T-cell (primary cell): ENCODE measurements at regions of chr4 and their contacts with region 1.

Region 1: GRCh38 chr4:163554870-163555465 is 60.5 kb downstream of the TMA16 start:
- DNase-seq: peak in 1 of 35 experiments; percentile 53
- ATAC-seq: no peak
- H3K4me3 ChIP-seq: no peak overlapping the region
- H3K4me3 Mint-ChIP-seq: no peak overlapping the region
- H3K27ac ChIP-seq: no peak overlapping the region
- H3K27ac Mint-ChIP-seq: no peak overlapping the region
- H3K4me1 ChIP-seq: peaks cover 10 to 16% of the 10 kb centered on the region in 2 experiments
- H3K4me1 Mint-ChIP-seq: peaks cover 30 to 44% (median 35%) of the 10 kb centered on the region in 3 donors
- H3K27me3 ChIP-seq: no peaks in the 10 kb centered on the region
- H3K27me3 Mint-ChIP-seq: no peaks in the 10 kb centered on the region

Region 2: DNA sequence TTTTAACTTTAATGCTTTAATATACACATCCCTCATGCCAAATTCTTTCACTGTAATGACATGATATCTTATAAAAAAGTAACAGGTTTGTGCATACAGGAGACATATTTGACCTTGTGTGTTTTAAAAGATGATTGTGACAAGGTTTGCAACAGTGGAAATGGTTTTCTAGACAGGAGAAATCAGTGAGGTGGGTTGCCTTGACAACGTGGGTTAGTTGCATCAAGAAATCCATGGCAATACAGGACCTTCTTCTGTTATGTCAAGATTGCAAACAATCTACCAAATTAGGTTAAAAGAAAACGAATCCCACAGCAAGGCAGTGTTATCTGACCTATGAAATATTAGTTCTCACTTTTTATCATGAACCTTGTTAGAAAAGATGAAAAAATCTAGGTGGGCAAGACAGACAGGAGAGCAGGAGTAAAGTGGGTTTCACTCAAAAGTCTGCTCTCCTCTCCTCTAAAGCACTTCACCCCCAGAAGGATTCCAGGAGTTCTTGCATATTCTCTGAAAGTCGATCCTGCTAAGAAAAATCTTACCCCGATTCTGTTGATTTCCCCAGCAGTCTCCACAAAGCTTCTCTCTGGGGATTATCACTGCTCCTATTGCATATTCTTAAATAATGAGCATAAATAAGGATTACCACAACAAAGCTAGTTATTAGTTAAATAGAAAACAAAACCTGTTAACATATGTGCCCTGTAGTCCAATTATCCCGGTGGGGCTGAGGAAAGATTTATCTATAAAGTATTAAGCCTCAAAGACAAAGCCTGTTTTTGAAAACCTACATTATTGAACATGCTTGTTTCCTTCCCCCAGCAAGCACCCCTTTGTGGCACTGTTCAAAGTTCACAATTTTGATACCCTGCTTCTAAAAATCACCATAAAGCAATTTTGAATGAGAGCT is 10.5 kb after region 1 on chr4:
- CTCF ChIA-PET with region 1: interaction called, 4 to 11 read pairs
- POLR2A ChIA-PET with region 1: no interaction called
- DNase-seq: no peak
- ATAC-seq: no peak
- H3K4me3 ChIP-seq: no peak overlapping the region
- H3K4me3 Mint-ChIP-seq: no peak overlapping the region
- H3K27ac ChIP-seq: no peak overlapping the region
- H3K27ac Mint-ChIP-seq: peak overlapping the region in 1 of 2 donors; percentile 29
- H3K4me1 ChIP-seq: no peaks in the 10 kb centered on the region
- H3K4me1 Mint-ChIP-seq: peaks cover 0 to 5% (median 5%) of the 10 kb centered on the region in 3 donors
- H3K27me3 ChIP-seq: no peaks in the 10 kb centered on the region
- H3K27me3 Mint-ChIP-seq: no peaks in the 10 kb centered on the region

Region 3: DNA sequence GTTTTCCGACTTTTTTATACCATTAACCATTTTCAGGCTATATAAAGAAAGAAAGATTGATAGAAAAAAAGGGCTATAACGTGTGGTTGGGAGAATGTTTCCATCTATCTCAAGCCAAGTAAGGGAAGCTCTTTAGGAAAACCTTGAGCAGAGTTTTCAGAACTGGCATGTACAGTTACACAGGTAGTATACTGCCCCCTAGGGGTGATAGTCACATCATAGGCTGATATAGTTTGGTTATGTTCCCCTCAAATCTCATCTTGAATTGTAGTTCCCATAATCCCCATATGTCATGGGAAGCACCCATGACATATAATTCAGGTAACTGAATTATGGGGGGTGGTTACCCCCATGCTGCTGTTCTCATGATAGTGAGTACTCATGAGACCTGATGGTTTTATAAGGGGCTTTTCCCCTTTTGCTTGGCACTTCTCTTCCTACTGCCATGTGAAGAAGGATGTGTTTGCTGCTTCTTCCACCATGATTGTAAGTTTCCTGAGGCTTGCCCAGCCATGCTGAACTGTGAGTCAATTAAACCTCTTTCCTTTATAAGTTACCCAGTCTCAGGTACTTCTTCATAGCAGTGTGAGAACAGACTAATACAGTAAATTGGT is 126.3 kb after region 1 on chr4:
- CTCF ChIA-PET with region 1: interaction called, 20 to 78 read pairs
- POLR2A ChIA-PET with region 1: no interaction called
- DNase-seq: peak in 12 of 35 experiments; percentile 0 to 78 (median 26)
- ATAC-seq: peak in 3 of 4 experiments; percentile 40 to 77 (median 49)
- H3K4me3 ChIP-seq: no peak overlapping the region
- H3K4me3 Mint-ChIP-seq: no peak overlapping the region
- H3K27ac ChIP-seq: no peak overlapping the region
- H3K27ac Mint-ChIP-seq: no peak overlapping the region
- H3K4me1 ChIP-seq: no peaks in the 10 kb centered on the region
- H3K4me1 Mint-ChIP-seq: peaks cover 1 to 5% (median 5%) of the 10 kb centered on the region in 3 donors
- H3K27me3 ChIP-seq: no peaks in the 10 kb centered on the region
- H3K27me3 Mint-ChIP-seq: peaks cover 0 to 3% of the 10 kb centered on the region in 2 donors

Region 4: DNA sequence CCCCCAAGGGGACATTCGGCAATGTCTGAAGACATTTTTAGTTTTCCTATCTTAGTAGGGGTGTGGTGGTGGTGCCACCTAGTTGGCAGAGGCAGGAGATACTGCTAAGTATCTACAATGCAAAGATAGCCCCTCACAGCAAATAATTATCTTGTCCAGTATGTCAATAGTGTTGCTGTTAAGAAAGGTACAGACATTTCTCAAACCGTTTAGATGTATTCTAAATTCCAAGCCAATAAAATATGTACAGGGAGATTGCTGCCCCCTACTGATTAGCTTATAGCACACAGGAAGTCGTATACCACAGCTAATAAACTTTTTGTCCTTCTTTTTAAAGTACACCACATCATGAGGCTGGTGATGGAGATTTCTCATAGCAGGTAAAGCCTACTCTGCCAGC is 200.0 kb after region 1 on chr4:
- CTCF ChIA-PET with region 1: interaction called, 4 to 42 read pairs
- POLR2A ChIA-PET with region 1: interaction called, 3 read pairs
- DNase-seq: peak in 1 of 35 experiments; percentile 47
- ATAC-seq: peak in 3 of 4 experiments; percentile 46 to 53 (median 46)
- H3K4me3 ChIP-seq: no peak overlapping the region
- H3K4me3 Mint-ChIP-seq: no peak overlapping the region
- H3K27ac ChIP-seq: no peak overlapping the region
- H3K27ac Mint-ChIP-seq: no peak overlapping the region
- H3K4me1 ChIP-seq: no peaks in the 10 kb centered on the region
- H3K4me1 Mint-ChIP-seq: peaks cover 0 to 4% (median 2%) of the 10 kb centered on the region in 3 donors
- H3K27me3 ChIP-seq: no peaks in the 10 kb centered on the region
- H3K27me3 Mint-ChIP-seq: peaks cover 0 to 3% of the 10 kb centered on the region in 2 donors

Region 5: GRCh38 chr4:164731827-164732474 is 1177.0 kb after region 1 on chr4:
- CTCF ChIA-PET with region 1: interaction called, 64 to 99 read pairs
- POLR2A ChIA-PET with region 1: no interaction called
- DNase-seq: peak in 32 of 35 experiments; percentile 5 to 63 (median 28)
- ATAC-seq: peak in 1 of 4 experiments; percentile 42
- H3K4me3 ChIP-seq: no peak overlapping the region
- H3K4me3 Mint-ChIP-seq: no peak overlapping the region
- H3K27ac ChIP-seq: no peak overlapping the region
- H3K27ac Mint-ChIP-seq: no peak overlapping the region
- H3K4me1 ChIP-seq: no peaks in the 10 kb centered on the region
- H3K4me1 Mint-ChIP-seq: no peaks in the 10 kb centered on the region
- H3K27me3 ChIP-seq: peaks cover 0 to 2% of the 10 kb centered on the region in 2 experiments
- H3K27me3 Mint-ChIP-seq: peaks cover 0 to 5% of the 10 kb centered on the region in 2 donors